ENCODE measurements at regions of chr9 and their contacts with region 1.

Region 1: GRCh38 chr9:81321046-81321504 is 368.3 kb downstream of the TLE1 start:
- DNase-seq: no peak
- ATAC-seq: peak in 1 of 4 donors; percentile 35
- H3K4me3 ChIP-seq: no peak overlapping the region
- H3K27ac ChIP-seq: no peak overlapping the region
- H3K4me1 ChIP-seq: no peaks in the 10 kb centered on the region
- H3K27me3 ChIP-seq: no peaks in the 10 kb centered on the region
- CTCF ChIP-seq: no peak

Region 2: GRCh38 chr9:81264516-81264915 is 56.6 kb before region 1 on chr9:
- intact Hi-C with region 1: loop called in 1 of 3 experiments (anchors 10 kb)
- DNase-seq: no peak
- ATAC-seq: peak in 3 of 4 donors; percentile 23 to 32 (median 27)
- H3K4me3 ChIP-seq: no peak overlapping the region
- H3K27ac ChIP-seq: no peak overlapping the region
- H3K4me1 ChIP-seq: no peaks in the 10 kb centered on the region
- H3K27me3 ChIP-seq: no peaks in the 10 kb centered on the region
- CTCF ChIP-seq: no peak

Region 3: GRCh38 chr9:81363916-81364480 is 42.9 kb after region 1 on chr9:
- intact Hi-C with region 1: no loop called
- DNase-seq: no peak
- ATAC-seq: no peak
- H3K4me3 ChIP-seq: no peak overlapping the region
- H3K27ac ChIP-seq: no peak overlapping the region
- H3K4me1 ChIP-seq: no peaks in the 10 kb centered on the region
- H3K27me3 ChIP-seq: no peaks in the 10 kb centered on the region
- CTCF ChIP-seq: no peak

Measured in pancreas (tissue), 10 donors.